CD4-positive, alpha-beta T cell (primary cell): ENCODE measurements at regions of chr10 and their contacts with region 1.

Region 1: DNA sequence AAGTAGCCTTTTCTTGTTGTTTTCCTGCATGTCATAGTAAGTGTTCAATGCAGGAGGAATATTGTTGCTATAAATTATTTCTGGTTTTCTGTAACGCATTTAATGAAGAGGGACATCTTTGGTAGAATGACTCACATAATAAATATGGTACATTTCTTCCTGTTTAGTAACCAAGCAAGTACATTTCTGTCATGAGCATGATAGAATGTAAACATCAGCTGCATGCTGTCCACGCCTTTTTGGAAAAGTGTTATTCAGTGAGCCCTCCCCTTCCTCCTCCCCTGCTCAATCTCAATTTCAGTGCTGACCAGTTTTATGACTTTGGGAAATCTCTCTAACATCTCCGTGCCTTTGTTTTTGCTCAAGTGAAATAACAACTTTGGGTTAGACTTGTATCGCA is 664.0 kb downstream of the XPNPEP1 start:
- DNase-seq: no peak
- ATAC-seq: no peak
- H3K4me3 ChIP-seq: no peak overlapping the region
- H3K4me3 Mint-ChIP-seq: no peak overlapping the region
- H3K27ac ChIP-seq: no peak overlapping the region
- H3K27ac Mint-ChIP-seq: no peak overlapping the region
- H3K4me1 ChIP-seq: no peaks in the 10 kb centered on the region
- H3K4me1 Mint-ChIP-seq: no peaks in the 10 kb centered on the region
- H3K27me3 ChIP-seq: no peaks in the 10 kb centered on the region
- H3K27me3 Mint-ChIP-seq: no peaks in the 10 kb centered on the region
- CTCF ChIP-seq: no peak

Region 2: GRCh38 chr10:108244443-108245228 is 1014.7 kb before region 1 on chr10:
- CTCF ChIA-PET with region 1: no interaction called
- POLR2A ChIA-PET with region 1: no interaction called
- intact Hi-C with region 1: no loop called
- DNase-seq: no peak
- ATAC-seq: no peak
- H3K4me3 ChIP-seq: no peak overlapping the region
- H3K4me3 Mint-ChIP-seq: no peak overlapping the region
- H3K27ac ChIP-seq: no peak overlapping the region
- H3K27ac Mint-ChIP-seq: no peak overlapping the region
- H3K4me1 ChIP-seq: no peaks in the 10 kb centered on the region
- H3K4me1 Mint-ChIP-seq: no peaks in the 10 kb centered on the region
- H3K27me3 ChIP-seq: no peaks in the 10 kb centered on the region
- H3K27me3 Mint-ChIP-seq: no peaks in the 10 kb centered on the region
- CTCF ChIP-seq: no peak

Region 3: GRCh38 chr10:109306698-109307097 is 47.4 kb after region 1 on chr10:
- CTCF ChIA-PET with region 1: no interaction called
- POLR2A ChIA-PET with region 1: no interaction called
- intact Hi-C with region 1: loop called in 1 of 2 experiments (anchors 5 kb)
- DNase-seq: no peak
- ATAC-seq: no peak
- H3K4me3 ChIP-seq: no peak overlapping the region
- H3K4me3 Mint-ChIP-seq: no peak overlapping the region
- H3K27ac ChIP-seq: no peak overlapping the region
- H3K27ac Mint-ChIP-seq: no peak overlapping the region
- H3K4me1 ChIP-seq: no peaks in the 10 kb centered on the region
- H3K4me1 Mint-ChIP-seq: no peaks in the 10 kb centered on the region
- H3K27me3 ChIP-seq: no peaks in the 10 kb centered on the region
- H3K27me3 Mint-ChIP-seq: no peaks in the 10 kb centered on the region
- CTCF ChIP-seq: no peak

Region 4: DNA sequence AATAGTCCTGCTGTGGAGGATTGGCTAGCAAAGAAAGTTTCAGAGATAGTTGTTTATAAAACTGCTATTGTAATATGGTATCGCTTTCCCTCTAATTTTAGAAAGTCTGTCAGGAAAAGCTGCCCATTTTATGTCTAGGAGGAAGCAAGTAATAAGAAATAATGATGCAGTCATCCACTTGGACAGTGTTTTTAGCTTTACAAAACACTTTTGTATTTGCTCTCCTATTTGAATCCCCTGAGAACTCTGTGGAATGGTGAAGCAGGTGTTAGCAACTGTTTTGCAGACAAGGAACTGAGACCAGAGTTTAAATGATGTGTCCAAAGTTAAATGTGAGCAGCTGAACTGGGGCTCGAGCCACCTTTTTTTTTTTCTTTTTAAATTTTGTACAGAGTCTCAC is 208.3 kb after region 1 on chr10:
- CTCF ChIA-PET with region 1: no interaction called
- POLR2A ChIA-PET with region 1: no interaction called
- intact Hi-C with region 1: no loop called
- DNase-seq: no peak
- ATAC-seq: no peak
- H3K4me3 ChIP-seq: no peak overlapping the region
- H3K4me3 Mint-ChIP-seq: no peak overlapping the region
- H3K27ac ChIP-seq: no peak overlapping the region
- H3K27ac Mint-ChIP-seq: no peak overlapping the region
- H3K4me1 ChIP-seq: no peaks in the 10 kb centered on the region
- H3K4me1 Mint-ChIP-seq: no peaks in the 10 kb centered on the region
- H3K27me3 ChIP-seq: no peaks in the 10 kb centered on the region
- H3K27me3 Mint-ChIP-seq: peaks cover 8% of the 10 kb centered on the region
- CTCF ChIP-seq: no peak